Activated CD8-positive, alpha-beta T cell treated with anti-CD3 and anti-CD28 coated beads, Interleukin-2, amount 10 ng/mL, durations not matched to agents 7 days and 5 days (primary cell): ENCODE measurements at regions of chr1 and their contacts with region 1.

Region 1: DNA sequence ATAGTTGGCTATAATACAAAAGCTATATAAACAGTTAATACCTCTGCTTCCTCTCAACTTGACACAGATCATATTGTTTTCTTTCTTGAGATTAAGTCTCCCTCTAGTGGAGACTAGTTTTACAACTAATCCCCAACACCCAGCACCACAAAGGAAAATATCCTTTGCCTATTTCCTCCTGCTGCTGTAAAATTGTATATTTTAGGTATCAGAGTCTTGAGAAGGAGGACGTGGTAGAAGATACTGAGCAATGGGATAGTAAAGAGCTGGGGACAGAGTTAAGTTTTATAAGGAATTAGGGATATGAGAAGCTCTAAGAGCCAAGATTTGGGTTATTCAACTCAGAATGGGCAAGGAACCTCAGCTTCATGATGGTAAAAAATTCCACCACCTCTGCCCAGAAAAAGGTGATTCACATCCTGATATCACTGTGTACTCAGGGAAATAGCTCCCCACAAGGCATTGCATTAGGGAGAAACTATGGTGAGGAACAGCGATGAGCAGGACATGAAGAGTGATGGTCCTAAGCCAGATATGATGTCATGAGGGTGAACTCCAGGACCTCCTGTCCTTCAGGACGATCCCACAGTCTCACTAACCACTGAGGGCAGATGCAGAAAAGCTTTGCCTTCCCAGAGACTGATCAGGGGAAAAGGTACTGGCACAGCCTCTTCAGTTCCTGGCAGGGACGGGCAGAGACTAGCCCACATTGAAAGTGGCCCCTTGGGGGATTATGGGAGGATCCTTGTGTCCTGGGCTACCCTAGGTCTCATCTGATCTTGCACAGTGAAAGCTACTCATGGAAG is 14.7 kb upstream of the CFAP126 start:
- DNase-seq: no peak
- ATAC-seq: peak; percentile 84
- H3K4me3 Mint-ChIP-seq: no peak overlapping the region
- H3K27ac Mint-ChIP-seq: no peak overlapping the region
- H3K4me1 Mint-ChIP-seq: peaks cover 16% of the 10 kb centered on the region
- H3K27me3 Mint-ChIP-seq: no peaks in the 10 kb centered on the region

Region 2: GRCh38 chr1:161192476-161193465 is 189.6 kb before region 1 on chr1:
- CTCF ChIA-PET with region 1: interaction called, 17 read pairs
- POLR2A ChIA-PET with region 1: no interaction called
- DNase-seq: peak; percentile 82
- ATAC-seq: peak; percentile 93
- H3K4me3 Mint-ChIP-seq: no peak overlapping the region
- H3K27ac Mint-ChIP-seq: peak overlapping the region; percentile 82
- H3K4me1 Mint-ChIP-seq: peaks cover 57% of the 10 kb centered on the region
- H3K27me3 Mint-ChIP-seq: no peaks in the 10 kb centered on the region

Region 3: GRCh38 chr1:161216945-161217712 is 165.3 kb before region 1 on chr1:
- CTCF ChIA-PET with region 1: interaction called, 11 read pairs
- POLR2A ChIA-PET with region 1: no interaction called
- DNase-seq: no peak
- ATAC-seq: peak; percentile 33
- H3K4me3 Mint-ChIP-seq: peak overlapping the region; percentile 55
- H3K27ac Mint-ChIP-seq: peak overlapping the region; percentile 77
- H3K4me1 Mint-ChIP-seq: peaks cover 52% of the 10 kb centered on the region
- H3K27me3 Mint-ChIP-seq: no peaks in the 10 kb centered on the region

Region 4: GRCh38 chr1:161292631-161293030 is 89.8 kb before region 1 on chr1:
- CTCF ChIA-PET with region 1: interaction called, 28 read pairs
- POLR2A ChIA-PET with region 1: no interaction called
- DNase-seq: no peak
- ATAC-seq: no peak
- H3K4me3 Mint-ChIP-seq: no peak overlapping the region
- H3K27ac Mint-ChIP-seq: no peak overlapping the region
- H3K4me1 Mint-ChIP-seq: peaks cover 3% of the 10 kb centered on the region
- H3K27me3 Mint-ChIP-seq: no peaks in the 10 kb centered on the region

Region 5: DNA sequence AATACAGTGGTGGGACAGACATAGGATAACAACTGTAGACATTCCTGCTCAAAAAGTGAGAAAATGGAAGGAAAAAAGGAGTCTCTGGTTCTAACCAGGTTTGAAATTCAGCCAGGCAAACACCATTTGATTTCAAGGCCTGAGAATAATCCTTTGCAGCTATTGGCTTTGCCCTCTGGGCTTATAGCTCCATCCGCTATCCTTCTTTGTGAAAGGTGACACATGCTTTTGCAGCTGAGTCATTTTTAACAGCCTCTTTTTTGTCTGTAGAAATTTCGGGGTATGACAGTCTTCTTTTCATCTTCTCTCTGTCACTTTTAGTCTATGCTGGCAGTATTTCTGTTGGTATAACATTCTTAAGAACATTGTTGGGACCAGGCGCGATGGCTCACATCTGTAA is 52.1 kb before region 1 on chr1:
- CTCF ChIA-PET with region 1: no interaction called
- POLR2A ChIA-PET with region 1: no interaction called
- DNase-seq: no peak
- ATAC-seq: no peak
- H3K4me3 Mint-ChIP-seq: no peak overlapping the region
- H3K27ac Mint-ChIP-seq: no peak overlapping the region
- H3K4me1 Mint-ChIP-seq: no peaks in the 10 kb centered on the region
- H3K27me3 Mint-ChIP-seq: no peaks in the 10 kb centered on the region

Region 6: GRCh38 chr1:161359291-161359690 is 23.1 kb before region 1 on chr1:
- CTCF ChIA-PET with region 1: interaction called, 13 read pairs
- POLR2A ChIA-PET with region 1: no interaction called
- DNase-seq: no peak
- ATAC-seq: no peak
- H3K4me3 Mint-ChIP-seq: no peak overlapping the region
- H3K27ac Mint-ChIP-seq: peak overlapping the region; percentile 32
- H3K4me1 Mint-ChIP-seq: peaks cover 10% of the 10 kb centered on the region
- H3K27me3 Mint-ChIP-seq: no peaks in the 10 kb centered on the region